Activated CD8-positive, alpha-beta memory T cell treated with anti-CD3 and anti-CD28 coated beads, Interleukin-2, amount 10 ng/mL, durations not matched to agents 7 days and 5 days (primary cell): ENCODE measurements at regions of chr14 and their contacts with region 1.

Region 1: GRCh38 chr14:72721083-72721482 is 172.8 kb downstream of the DPF3 start:
- DNase-seq: no peak
- ATAC-seq: peak; percentile 61
- H3K4me3 Mint-ChIP-seq: no peak overlapping the region
- H3K27ac Mint-ChIP-seq: no peak overlapping the region
- H3K4me1 Mint-ChIP-seq: peaks cover 23% of the 10 kb centered on the region
- H3K27me3 Mint-ChIP-seq: no peaks in the 10 kb centered on the region

Region 2: DNA sequence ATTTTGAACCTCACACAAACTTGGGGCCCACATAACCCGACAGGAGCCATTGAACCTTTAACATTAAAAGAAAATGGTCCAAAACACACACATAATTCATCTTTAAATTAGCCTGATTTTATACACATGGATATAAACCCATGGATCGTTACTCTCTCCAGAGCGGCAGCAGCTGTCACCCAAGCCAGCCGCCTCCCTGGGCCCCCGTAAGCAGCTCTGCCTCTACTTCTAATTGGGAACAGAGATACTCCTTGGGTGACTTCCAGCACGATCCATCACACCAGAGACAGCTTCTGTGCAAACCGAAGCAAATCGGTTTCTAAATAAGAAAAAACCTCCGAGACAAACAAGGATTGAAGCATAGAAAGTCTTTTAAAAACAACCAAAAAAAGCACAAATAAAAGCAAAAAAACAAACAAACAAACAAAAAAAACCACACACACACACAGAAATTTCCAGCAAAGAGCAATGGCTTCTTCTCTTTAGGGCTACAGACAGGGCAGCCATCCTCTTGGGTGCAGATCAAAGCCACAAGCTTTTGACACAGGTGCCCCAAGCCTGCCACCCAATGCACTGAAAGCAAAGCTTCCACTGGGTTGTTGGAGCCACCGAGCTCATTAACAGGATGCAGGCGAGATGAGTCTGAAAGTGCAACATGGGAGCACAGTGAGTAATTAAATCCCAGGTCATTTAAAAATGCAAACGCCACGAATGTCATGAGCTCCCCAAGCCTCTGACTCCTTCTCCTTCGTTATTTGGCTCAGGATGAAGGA is 15.9 kb after region 1 on chr14:
- CTCF ChIA-PET with region 1: interaction called, 11 read pairs
- DNase-seq: peak; percentile 29
- ATAC-seq: no peak
- H3K4me3 Mint-ChIP-seq: no peak overlapping the region
- H3K27ac Mint-ChIP-seq: no peak overlapping the region
- H3K4me1 Mint-ChIP-seq: no peaks in the 10 kb centered on the region
- H3K27me3 Mint-ChIP-seq: peaks cover 19% of the 10 kb centered on the region